ENCODE measurements at regions of chr6 and their contacts with region 1.

Region 1: DNA sequence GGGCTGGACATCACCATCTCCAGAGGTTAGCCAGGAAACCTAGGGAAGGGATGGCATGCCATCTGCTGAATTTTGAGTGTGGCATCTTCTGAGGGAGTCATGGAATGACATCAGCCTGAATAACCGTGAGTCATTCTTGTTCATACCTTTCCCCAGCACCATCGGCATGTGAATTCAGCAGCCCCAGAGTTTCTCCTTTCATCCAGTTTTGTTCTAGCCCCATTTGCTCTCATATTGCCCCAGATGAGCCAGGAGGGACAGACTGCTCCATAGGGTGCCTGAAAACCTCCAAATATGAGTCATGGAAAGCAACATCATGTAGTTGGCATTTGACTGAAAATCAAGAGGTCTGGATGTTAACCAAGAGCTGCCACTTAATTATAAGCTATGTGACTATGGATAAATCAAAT is 219.2 kb upstream of the SGK1 start:
- DNase-seq: no peak
- ATAC-seq: no peak

Region 2: DNA sequence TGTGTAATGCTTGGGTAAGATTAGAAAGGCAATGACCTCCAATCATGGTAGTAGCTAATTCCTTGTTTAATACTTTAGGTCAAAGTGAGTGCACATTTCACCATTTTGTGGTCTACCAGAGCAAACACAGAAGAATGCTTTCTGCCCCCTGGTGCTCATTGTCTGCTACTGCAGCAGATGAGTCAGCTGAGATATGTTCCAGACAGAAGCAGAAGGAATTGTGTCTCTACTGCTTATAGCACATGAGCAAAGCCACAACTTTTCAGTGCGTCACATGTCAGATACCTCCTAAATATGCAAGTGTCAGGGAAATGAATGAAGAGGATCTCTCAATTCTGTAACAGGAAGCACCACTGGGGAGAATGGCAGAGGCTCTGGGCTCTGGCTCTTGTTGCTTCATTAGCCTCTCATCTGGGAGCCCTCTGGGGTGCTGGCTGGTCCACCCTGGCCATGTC is 103.9 kb after region 1 on chr6:
- intact Hi-C with region 1: loop called (anchors 10 kb)
- DNase-seq: peak; percentile 78
- ATAC-seq: peak; percentile 91

Measured in Right ventricle myocardium inferior (tissue), 1 donor.